ENCODE measurements at regions of chr1 and their contacts with region 1.

Region 1: DNA sequence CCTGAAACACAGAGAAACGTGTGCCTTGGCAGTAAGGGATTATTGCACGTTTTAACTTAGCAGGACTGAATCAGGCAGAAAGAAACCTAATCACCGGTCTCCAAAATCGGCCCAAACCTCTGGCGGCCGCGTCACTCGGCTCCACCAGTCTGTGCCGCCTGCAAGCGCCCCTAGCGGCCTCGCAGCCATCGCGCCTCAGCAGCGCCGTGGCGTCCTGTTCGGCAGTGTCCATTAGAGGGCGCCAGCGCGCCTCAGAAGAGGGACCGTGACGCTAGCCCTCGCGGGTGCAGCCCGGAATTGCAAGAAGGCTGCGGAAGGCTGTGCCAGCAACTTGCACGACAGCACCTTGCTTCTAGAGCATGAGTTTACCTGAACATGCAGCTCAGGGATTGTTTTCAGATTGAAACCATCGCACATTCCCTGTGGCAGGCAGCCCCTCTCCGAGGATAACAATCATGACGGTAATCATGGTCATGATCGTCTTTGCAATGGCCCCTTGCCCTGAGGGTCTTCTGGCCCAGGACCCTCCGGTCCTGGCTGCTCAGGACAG is 164.4 kb downstream of the TRIM33 start:
- DNase-seq: peak; percentile 91 to 99 (median 98)
- ATAC-seq: peak; percentile 100
- H3K4me3 ChIP-seq: peak overlapping the region; percentile 65
- H3K4me3 Mint-ChIP-seq: peak overlapping the region; percentile 89 to 98 (median 92)
- H3K27ac ChIP-seq: peak overlapping the region; percentile 53
- H3K27ac Mint-ChIP-seq: peak overlapping the region; percentile 86 to 99 (median 91)
- H3K4me1 ChIP-seq: peaks cover 29 to 38% of the 10 kb centered on the region in 2 donors
- H3K4me1 Mint-ChIP-seq: peaks cover 23 to 46% (median 33%) of the 10 kb centered on the region in 7 donors
- H3K27me3 ChIP-seq: no peaks in the 10 kb centered on the region
- H3K27me3 Mint-ChIP-seq: no peaks in the 10 kb centered on the region

Region 2: GRCh38 chr1:113389953-113390834 is 956.4 kb before region 1 on chr1 and contains the start of gene MAGI3:
- CTCF ChIA-PET with region 1: no interaction called
- POLR2A ChIA-PET with region 1: interaction called, 3 read pairs
- intact Hi-C with region 1: loop called (anchors 10 kb)
- DNase-seq: peak; percentile 84 to 97 (median 91)
- ATAC-seq: peak; percentile 95
- H3K4me3 ChIP-seq: peak within 1 kb of the TSS; percentile 88
- H3K4me3 Mint-ChIP-seq: peak within 1 kb of the TSS; percentile 84 to 98 (median 94)
- H3K27ac ChIP-seq: peak within 1 kb of the TSS; percentile 71
- H3K27ac Mint-ChIP-seq: peak within 1 kb of the TSS; percentile 38 to 89 (median 85)
- H3K4me1 ChIP-seq: peaks cover 0 to 16% of the 10 kb centered on the region in 2 donors
- H3K4me1 Mint-ChIP-seq: peaks cover 22 to 31% (median 26%) of the 10 kb centered on the region in 7 donors
- H3K27me3 ChIP-seq: no peaks in the 10 kb centered on the region
- H3K27me3 Mint-ChIP-seq: peaks cover 0 to 42% (median 6%) of the 10 kb centered on the region in 5 donors
- total RNA-seq, gene MAGI3: 5.7 to 8.8 (median 7.2) TPM

Region 3: GRCh38 chr1:114330451-114330983 is 16.0 kb before region 1 on chr1:
- CTCF ChIA-PET with region 1: interaction called, 27 read pairs
- POLR2A ChIA-PET with region 1: interaction called, 37 read pairs
- intact Hi-C with region 1: loop called in 1 of 2 experiments (anchors 1 kb)
- DNase-seq: peak in 5 of 9 donors; percentile 36 to 60 (median 44)
- ATAC-seq: peak; percentile 80
- H3K4me3 ChIP-seq: no peak overlapping the region
- H3K4me3 Mint-ChIP-seq: peak overlapping the region in 6 of 10 donors; percentile 14 to 72 (median 34)
- H3K27ac ChIP-seq: no peak overlapping the region
- H3K27ac Mint-ChIP-seq: peak overlapping the region in 8 of 9 donors; percentile 22 to 94 (median 72)
- H3K4me1 ChIP-seq: peaks cover 62 to 64% of the 10 kb centered on the region in 2 donors
- H3K4me1 Mint-ChIP-seq: peaks cover 35 to 70% (median 52%) of the 10 kb centered on the region in 7 donors
- H3K27me3 ChIP-seq: no peaks in the 10 kb centered on the region
- H3K27me3 Mint-ChIP-seq: peaks cover 0 to 21% (median 0%) of the 10 kb centered on the region in 5 donors

Region 4: DNA sequence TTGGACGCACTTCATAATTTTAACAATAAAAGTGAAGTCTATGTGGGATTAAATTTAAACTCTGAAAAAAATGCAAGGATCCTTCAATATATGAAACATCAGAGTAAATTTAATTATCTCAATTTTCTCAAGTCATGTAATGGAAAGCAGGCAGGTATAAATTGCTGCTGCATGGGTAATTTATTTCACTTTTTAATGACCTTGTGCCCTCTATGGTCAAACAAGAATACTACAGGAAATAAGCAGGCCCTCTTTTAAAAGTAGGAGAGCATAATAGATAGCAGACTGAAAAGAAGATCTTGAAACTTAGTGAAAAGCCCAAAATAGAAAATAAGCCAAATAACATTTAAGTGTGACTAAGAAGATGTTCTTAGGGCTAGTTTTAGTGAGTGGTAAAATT is 212.0 kb after region 1 on chr1:
- CTCF ChIA-PET with region 1: interaction called, 3 read pairs
- POLR2A ChIA-PET with region 1: no interaction called
- intact Hi-C with region 1: loop called (anchors 1 kb)
- DNase-seq: peak in 4 of 9 donors; percentile 16 to 39 (median 25)
- ATAC-seq: no peak
- H3K4me3 ChIP-seq: no peak overlapping the region
- H3K4me3 Mint-ChIP-seq: no peak overlapping the region
- H3K27ac ChIP-seq: no peak overlapping the region
- H3K27ac Mint-ChIP-seq: no peak overlapping the region
- H3K4me1 ChIP-seq: no peaks in the 10 kb centered on the region
- H3K4me1 Mint-ChIP-seq: peaks cover 0 to 3% (median 0%) of the 10 kb centered on the region in 7 donors
- H3K27me3 ChIP-seq: no peaks in the 10 kb centered on the region
- H3K27me3 Mint-ChIP-seq: no peaks in the 10 kb centered on the region

Region 5: DNA sequence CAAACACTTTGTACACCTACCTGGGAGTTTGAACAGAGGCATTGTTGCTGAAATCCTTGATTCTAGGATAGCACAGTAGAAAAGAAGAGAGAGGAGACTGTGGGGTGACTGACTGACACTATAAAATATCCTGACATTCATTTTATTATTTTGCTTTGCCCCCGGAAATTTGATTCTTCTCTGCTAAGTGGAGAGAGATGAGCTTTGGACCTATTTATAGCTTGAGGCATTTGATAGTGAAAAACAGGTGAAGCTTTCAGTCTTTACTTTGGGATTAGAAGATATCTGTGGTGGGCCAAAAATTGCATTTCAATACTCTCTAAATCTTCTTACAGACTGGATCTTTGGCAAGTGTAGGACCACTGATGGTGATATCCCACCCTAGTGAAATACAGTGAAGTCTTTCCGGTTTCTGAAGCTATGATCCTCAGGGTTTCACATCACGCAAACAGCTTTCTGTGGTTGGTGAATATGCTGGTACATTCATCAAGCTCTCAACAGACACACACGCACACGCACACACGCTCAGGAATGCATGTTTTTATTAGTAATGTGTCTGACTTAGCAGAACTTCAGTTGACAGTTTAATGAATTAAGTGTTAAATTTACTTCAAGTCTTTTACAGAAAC is 349.0 kb after region 1 on chr1 and contains the start of gene AMPD1:
- CTCF ChIA-PET with region 1: no interaction called
- POLR2A ChIA-PET with region 1: no interaction called
- intact Hi-C with region 1: no loop called
- DNase-seq: no peak
- ATAC-seq: no peak
- H3K4me3 ChIP-seq: no peak within 1 kb of the TSS
- H3K4me3 Mint-ChIP-seq: no peak within 1 kb of the TSS
- H3K27ac ChIP-seq: no peak within 1 kb of the TSS
- H3K27ac Mint-ChIP-seq: no peak within 1 kb of the TSS
- H3K4me1 ChIP-seq: no peaks in the 10 kb centered on the region
- H3K4me1 Mint-ChIP-seq: no peaks in the 10 kb centered on the region
- H3K27me3 ChIP-seq: no peaks in the 10 kb centered on the region
- H3K27me3 Mint-ChIP-seq: peaks cover 5 to 20% (median 13%) of the 10 kb centered on the region in 5 donors
- total RNA-seq, gene AMPD1: not detected

Region 6: GRCh38 chr1:114757455-114758250 is 411.1 kb after region 1 on chr1 and contains the start of gene CSDE1:
- CTCF ChIA-PET with region 1: no interaction called
- POLR2A ChIA-PET with region 1: no interaction called
- intact Hi-C with region 1: loop called (anchors 5 to 10 kb)
- DNase-seq: peak; percentile 91 to 97 (median 96)
- ATAC-seq: peak; percentile 90
- H3K4me3 ChIP-seq: peak within 1 kb of the TSS; percentile 100
- H3K4me3 Mint-ChIP-seq: peak within 1 kb of the TSS; percentile 95 to 100 (median 100)
- H3K27ac ChIP-seq: peak within 1 kb of the TSS; percentile 97
- H3K27ac Mint-ChIP-seq: peak within 1 kb of the TSS; percentile 97 to 100 (median 100)
- H3K4me1 ChIP-seq: peaks cover 44 to 49% of the 10 kb centered on the region in 2 donors
- H3K4me1 Mint-ChIP-seq: peaks cover 32 to 60% (median 51%) of the 10 kb centered on the region in 7 donors
- H3K27me3 ChIP-seq: no peaks in the 10 kb centered on the region
- H3K27me3 Mint-ChIP-seq: no peaks in the 10 kb centered on the region
- total RNA-seq, gene CSDE1: 378 to 638 (median 561) TPM

Region 7: GRCh38 chr1:115098979-115099692 is 752.6 kb after region 1 on chr1:
- CTCF ChIA-PET with region 1: no interaction called
- POLR2A ChIA-PET with region 1: no interaction called
- intact Hi-C with region 1: loop called in 1 of 2 experiments (anchors 2 kb)
- DNase-seq: peak; percentile 31 to 95 (median 94)
- ATAC-seq: peak; percentile 95
- H3K4me3 ChIP-seq: peak overlapping the region; percentile 58
- H3K4me3 Mint-ChIP-seq: peak overlapping the region; percentile 76 to 99 (median 90)
- H3K27ac ChIP-seq: peak overlapping the region; percentile 89
- H3K27ac Mint-ChIP-seq: peak overlapping the region; percentile 98 to 100 (median 99)
- H3K4me1 ChIP-seq: peaks cover 20 to 29% of the 10 kb centered on the region in 2 donors
- H3K4me1 Mint-ChIP-seq: peaks cover 24 to 59% (median 51%) of the 10 kb centered on the region in 7 donors
- H3K27me3 ChIP-seq: no peaks in the 10 kb centered on the region
- H3K27me3 Mint-ChIP-seq: peaks cover 0 to 27% (median 0%) of the 10 kb centered on the region in 5 donors